H1 (cell line): ENCODE measurements at regions of chr3 and their contacts with region 1.

Region 1: GRCh38 chr3:185460719-185461350 is 38.0 kb downstream of the TMEM41A start:
- DNase-seq: no peak
- H3K4me3 ChIP-seq: no peak overlapping the region
- H3K27ac ChIP-seq: no peak overlapping the region
- H3K4me1 ChIP-seq: no peaks in the 10 kb centered on the region
- H3K27me3 ChIP-seq: no peaks in the 10 kb centered on the region
- CTCF ChIP-seq: peak in 2 of 3 experiments; percentile 25 to 45; a peak in 2 of 4 replicates
- EP300 ChIP-seq: no peak
- POLR2A ChIP-seq: no peak
- RAD21 ChIP-seq: peak; percentile 39 to 44

Region 2: GRCh38 chr3:185473290-185473815 is 12.5 kb after region 1 on chr3:
- CTCF ChIA-PET with region 1: interaction called, 18 read pairs
- POLR2A ChIA-PET with region 1: no interaction called
- DNase-seq: no peak
- H3K4me3 ChIP-seq: no peak overlapping the region
- H3K27ac ChIP-seq: no peak overlapping the region
- H3K4me1 ChIP-seq: peaks cover 0 to 4% (median 3%) of the 10 kb centered on the region in 4 experiments; a peak in 3 of 7 replicates
- H3K27me3 ChIP-seq: no peaks in the 10 kb centered on the region
- CTCF ChIP-seq: no peak
- EP300 ChIP-seq: no peak
- POLR2A ChIP-seq: no peak
- RAD21 ChIP-seq: no peak

Region 3: DNA sequence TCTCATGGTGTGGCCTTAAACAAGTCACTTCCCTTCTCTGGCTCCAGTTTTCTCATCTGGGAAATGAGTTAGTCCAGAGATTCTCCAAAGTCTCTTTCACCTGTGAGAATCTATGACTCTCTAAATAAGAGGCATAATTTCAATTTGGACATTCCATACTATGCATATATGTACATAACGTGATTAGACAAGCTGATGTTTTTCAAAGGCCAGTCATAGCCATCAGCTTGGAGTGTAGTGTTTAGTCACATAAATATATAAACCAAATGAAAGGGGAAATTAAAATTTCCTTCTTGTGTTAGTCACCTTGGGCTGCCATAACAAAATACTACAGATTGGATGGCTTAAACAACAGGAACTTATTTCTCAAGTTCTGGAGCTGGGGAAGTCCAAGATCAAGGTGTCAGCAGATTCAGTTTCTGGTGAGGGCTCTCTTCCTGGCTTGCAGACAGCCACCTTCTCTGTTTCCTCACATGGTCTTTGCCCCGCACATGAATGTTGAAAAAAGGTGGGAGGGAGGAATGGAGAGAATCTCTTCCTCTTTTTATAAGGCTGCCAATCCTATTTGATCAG is 18.6 kb after region 1 on chr3:
- CTCF ChIA-PET with region 1: interaction called, 12 read pairs
- POLR2A ChIA-PET with region 1: no interaction called
- DNase-seq: no peak
- H3K4me3 ChIP-seq: no peak overlapping the region
- H3K27ac ChIP-seq: no peak overlapping the region
- H3K4me1 ChIP-seq: no peaks in the 10 kb centered on the region
- H3K27me3 ChIP-seq: no peaks in the 10 kb centered on the region
- CTCF ChIP-seq: no peak
- EP300 ChIP-seq: no peak
- POLR2A ChIP-seq: no peak
- RAD21 ChIP-seq: no peak

Region 4: DNA sequence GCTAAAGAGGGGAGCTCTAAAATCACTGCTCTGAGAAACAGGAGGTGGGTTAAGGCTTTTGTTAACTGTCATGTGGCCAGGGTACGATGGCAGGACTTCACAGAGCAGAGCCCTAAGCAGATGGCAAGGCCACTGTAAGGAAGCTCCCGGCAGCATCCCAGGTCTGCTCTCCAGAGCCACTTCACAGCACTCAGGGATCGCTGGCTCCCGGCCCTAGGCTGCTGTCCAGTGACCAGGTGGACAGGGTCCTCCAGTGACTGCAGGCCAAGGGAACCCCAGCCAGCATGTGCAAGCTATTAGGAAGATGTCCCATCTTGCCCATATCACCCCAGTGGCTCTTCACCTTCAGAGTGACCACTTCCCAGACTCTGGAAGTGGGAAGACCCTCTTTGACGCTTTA is 27.6 kb after region 1 on chr3:
- CTCF ChIA-PET with region 1: interaction called, 12 read pairs
- POLR2A ChIA-PET with region 1: interaction called, 4 read pairs
- DNase-seq: no peak
- H3K4me3 ChIP-seq: no peak overlapping the region
- H3K27ac ChIP-seq: no peak overlapping the region
- H3K4me1 ChIP-seq: no peaks in the 10 kb centered on the region
- H3K27me3 ChIP-seq: no peaks in the 10 kb centered on the region
- CTCF ChIP-seq: no peak
- EP300 ChIP-seq: no peak
- POLR2A ChIP-seq: no peak
- RAD21 ChIP-seq: no peak

Region 5: GRCh38 chr3:185498503-185499396 is 37.9 kb after region 1 on chr3 and contains the start of gene TMEM41A:
- CTCF ChIA-PET with region 1: interaction called, 12 read pairs
- POLR2A ChIA-PET with region 1: interaction called, 5 read pairs
- DNase-seq: peak; percentile 73 to 98
- H3K4me3 ChIP-seq: peak within 1 kb of the TSS; percentile 90 to 98 (median 91)
- H3K27ac ChIP-seq: peak within 1 kb of the TSS; percentile 66
- H3K4me1 ChIP-seq: no peaks in the 10 kb centered on the region
- H3K27me3 ChIP-seq: no peaks in the 10 kb centered on the region
- CTCF ChIP-seq: peak in 2 of 3 experiments; percentile 22 to 24; a peak in 2 of 4 replicates
- EP300 ChIP-seq: peak in 1 of 2 experiments; percentile 78; a peak in 1 of 3 replicates
- POLR2A ChIP-seq: peak; percentile 88 to 98
- RAD21 ChIP-seq: peak; percentile 9 to 36; a peak in 3 of 4 replicates
- total RNA-seq, gene TMEM41A: 13.5 and 14.1 TPM in 2 replicates

Region 6: GRCh38 chr3:185561374-185561943 is 100.6 kb after region 1 on chr3:
- CTCF ChIA-PET with region 1: interaction called, 22 read pairs
- POLR2A ChIA-PET with region 1: no interaction called
- DNase-seq: no peak
- H3K4me3 ChIP-seq: no peak overlapping the region
- H3K27ac ChIP-seq: 0 out of 2 replicates have a peak overlapping the region, but pooled peaks have one; percentile 4
- H3K4me1 ChIP-seq: peaks cover 6 to 16% (median 9%) of the 10 kb centered on the region in 4 experiments
- H3K27me3 ChIP-seq: no peaks in the 10 kb centered on the region
- CTCF ChIP-seq: no peak
- EP300 ChIP-seq: no peak
- POLR2A ChIP-seq: no peak
- RAD21 ChIP-seq: no peak